HepG2 (cell line): ENCODE measurements at regions of chr13 and their contacts with region 1.

Region 1: DNA sequence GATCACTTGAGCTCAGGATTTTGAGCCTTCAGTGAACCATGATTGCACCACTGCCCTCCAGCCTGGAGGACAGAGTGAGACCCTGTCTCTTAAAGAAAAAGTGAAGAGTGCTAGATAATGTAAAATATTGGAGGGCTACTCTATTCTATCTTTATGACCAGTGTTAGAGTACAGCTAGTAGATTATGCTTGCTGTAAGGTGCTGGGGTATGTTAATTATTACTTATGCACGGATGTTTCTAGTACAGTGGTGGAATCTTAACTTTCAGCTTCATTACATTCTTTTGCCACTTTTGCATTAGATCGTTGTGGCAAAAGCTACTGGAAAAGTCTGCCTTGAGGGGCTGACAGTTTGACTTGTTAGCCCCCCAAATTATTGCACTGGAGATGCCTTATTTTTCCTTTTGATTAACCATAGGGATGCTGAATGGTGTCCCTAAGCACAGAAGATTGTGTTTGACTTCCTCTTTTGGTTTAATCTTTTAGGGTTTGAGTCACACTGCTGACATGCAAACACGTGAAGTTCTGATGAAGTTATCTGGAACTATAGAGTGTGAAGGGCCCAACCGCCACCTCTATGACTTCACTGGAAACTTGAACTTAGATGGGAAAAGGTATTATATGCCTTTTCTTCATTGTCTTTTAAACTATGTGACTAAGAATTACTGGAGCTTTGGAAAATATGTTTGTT is 169.8 kb downstream of the ATP8A2 start:
- DNase-seq: no peak
- ATAC-seq: no peak
- H3K4me3 ChIP-seq: no peak overlapping the region
- H3K27ac ChIP-seq: no peak overlapping the region
- H3K4me1 ChIP-seq: no peaks in the 10 kb centered on the region
- H3K27me3 ChIP-seq: no peaks in the 10 kb centered on the region
- CTCF ChIP-seq: no peak
- EP300 ChIP-seq: no peak
- POLR2A ChIP-seq: no peak
- RAD21 ChIP-seq: no peak

Region 2: DNA sequence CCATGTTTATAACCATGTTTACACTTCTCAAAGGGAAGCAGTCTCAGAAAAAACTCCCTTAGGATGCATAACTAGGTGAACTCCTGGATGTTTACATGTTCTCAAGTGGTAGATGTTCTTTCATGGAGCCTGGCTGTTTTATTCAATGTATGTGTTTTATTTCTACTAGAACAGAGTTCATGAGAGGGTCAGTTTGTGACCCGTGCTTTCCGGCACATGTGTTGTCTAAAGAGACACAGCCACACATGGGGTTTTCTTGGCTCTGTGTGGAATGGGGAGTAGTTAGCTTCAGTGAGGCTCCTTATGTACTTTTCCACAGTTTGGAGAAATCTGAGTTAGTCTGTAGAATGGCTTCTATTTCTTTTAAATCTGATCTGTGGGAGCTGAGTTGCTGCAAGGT is 108.9 kb before region 1 on chr13:
- CTCF ChIA-PET with region 1: no interaction called
- POLR2A ChIA-PET with region 1: no interaction called
- in situ Hi-C with region 1: no loop called
- intact Hi-C with region 1: no loop called
- DNase-seq: no peak
- ATAC-seq: no peak
- H3K4me3 ChIP-seq: no peak overlapping the region
- H3K27ac ChIP-seq: no peak overlapping the region
- H3K4me1 ChIP-seq: no peaks in the 10 kb centered on the region
- H3K27me3 ChIP-seq: no peaks in the 10 kb centered on the region
- CTCF ChIP-seq: no peak
- EP300 ChIP-seq: no peak
- POLR2A ChIP-seq: no peak
- RAD21 ChIP-seq: no peak

Region 3: DNA sequence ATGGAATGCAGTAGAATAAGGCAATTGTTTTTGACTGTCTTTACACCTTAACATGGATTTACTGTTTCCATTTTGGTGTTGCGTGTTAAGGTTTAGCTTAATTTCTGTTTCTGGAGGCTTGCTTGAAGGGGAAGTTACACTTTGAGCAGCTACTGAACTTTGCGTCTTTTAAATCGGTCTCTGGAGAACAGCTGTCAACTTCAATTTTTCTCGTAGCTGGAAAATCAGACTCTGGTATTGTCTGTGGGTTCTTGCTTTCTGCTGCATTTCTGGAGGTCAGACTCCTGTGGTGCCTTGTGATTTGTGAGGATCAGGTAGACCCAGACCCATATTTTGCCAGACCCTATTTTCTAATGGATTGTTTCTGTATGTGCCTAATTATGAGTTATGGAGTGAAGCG is 23.1 kb before region 1 on chr13:
- CTCF ChIA-PET with region 1: no interaction called
- POLR2A ChIA-PET with region 1: no interaction called
- in situ Hi-C with region 1: no loop called
- intact Hi-C with region 1: no loop called
- DNase-seq: no peak
- ATAC-seq: no peak
- H3K4me3 ChIP-seq: no peak overlapping the region
- H3K27ac ChIP-seq: no peak overlapping the region
- H3K4me1 ChIP-seq: no peaks in the 10 kb centered on the region
- H3K27me3 ChIP-seq: no peaks in the 10 kb centered on the region
- CTCF ChIP-seq: no peak
- EP300 ChIP-seq: no peak
- POLR2A ChIP-seq: no peak
- RAD21 ChIP-seq: no peak

Region 4: DNA sequence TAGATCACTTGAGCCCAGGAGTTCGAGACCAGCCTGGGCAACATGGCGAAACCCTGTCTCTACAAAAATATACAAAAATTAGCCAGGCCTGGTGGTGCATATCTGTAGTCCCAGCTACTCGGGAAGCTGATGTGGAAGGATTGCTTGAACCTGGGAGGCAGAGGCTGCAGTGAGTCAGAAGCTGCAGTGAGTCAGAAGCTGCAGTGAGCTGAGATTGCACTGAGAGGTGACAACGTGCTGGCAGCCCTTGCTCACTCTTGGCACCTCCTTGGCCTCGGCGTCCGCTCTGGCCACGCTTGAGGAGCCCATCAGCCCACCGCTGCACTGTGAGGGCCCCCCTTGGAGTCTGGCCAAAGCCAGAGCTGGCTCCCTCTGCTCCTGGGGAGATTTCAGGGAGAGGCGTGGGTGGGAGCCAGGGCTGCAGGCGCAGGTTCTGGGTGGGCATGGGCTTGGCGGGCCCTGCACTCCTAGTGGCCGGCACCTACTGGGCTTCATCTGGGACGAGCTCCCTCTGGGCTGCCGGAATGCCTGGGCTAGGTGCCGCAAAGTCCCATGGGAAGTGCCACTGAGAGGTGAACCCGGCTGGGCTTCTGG is 1670.3 kb after region 1 on chr13:
- CTCF ChIA-PET with region 1: no interaction called
- POLR2A ChIA-PET with region 1: no interaction called
- in situ Hi-C with region 1: no loop called
- intact Hi-C with region 1: loop called (anchors 10 kb)
- DNase-seq: no peak
- ATAC-seq: peak; percentile 48
- H3K4me3 ChIP-seq: no peak overlapping the region
- H3K27ac ChIP-seq: no peak overlapping the region
- H3K4me1 ChIP-seq: no peaks in the 10 kb centered on the region
- H3K27me3 ChIP-seq: no peaks in the 10 kb centered on the region
- CTCF ChIP-seq: no peak
- EP300 ChIP-seq: no peak
- POLR2A ChIP-seq: no peak
- RAD21 ChIP-seq: no peak